Endothelial cell of umbilical vein (primary cell): ENCODE measurements at regions of chr16 and their contacts with region 1.

Region 1: GRCh38 chr16:10509534-10510025 is 70.8 kb downstream of the EMP2 start:
- DNase-seq: peak; percentile 62
- H3K4me3 ChIP-seq: no peak overlapping the region
- H3K27ac ChIP-seq: no peak overlapping the region
- H3K4me1 ChIP-seq: no peaks in the 10 kb centered on the region
- H3K27me3 ChIP-seq: peaks cover 0 to 4% of the 10 kb centered on the region in 2 experiments
- CTCF ChIP-seq: peak; percentile 57 to 65
- POLR2A ChIP-seq: no peak

Region 2: DNA sequence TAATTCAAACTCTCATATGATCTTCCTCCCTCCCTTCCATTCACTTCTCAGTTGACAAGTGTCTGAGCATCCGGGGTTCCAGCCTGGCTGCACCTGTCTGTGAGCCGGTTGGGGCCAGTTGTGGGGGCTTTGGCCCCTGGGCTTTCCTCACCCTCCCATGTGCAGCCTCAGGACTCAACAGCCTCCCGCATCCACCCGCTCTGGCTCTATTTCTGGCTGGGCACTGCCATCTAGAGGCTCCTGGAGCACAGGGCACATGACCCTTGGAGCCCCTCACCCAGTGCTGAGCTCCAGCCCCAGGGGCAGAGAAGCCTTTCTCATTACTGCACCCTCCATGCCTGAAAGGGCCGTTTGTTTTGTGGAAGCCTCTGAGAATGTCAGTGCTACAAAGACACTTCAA is 1374.8 kb before region 1 on chr16:
- CTCF ChIA-PET with region 1: interaction called, 18 read pairs
- POLR2A ChIA-PET with region 1: no interaction called
- dilution Hi-C with region 1: no loop called
- intact Hi-C with region 1: loop called (anchors 2 kb)
- DNase-seq: peak; percentile 47
- H3K4me3 ChIP-seq: no peak overlapping the region
- H3K27ac ChIP-seq: no peak overlapping the region
- H3K4me1 ChIP-seq: no peaks in the 10 kb centered on the region
- H3K27me3 ChIP-seq: no peaks in the 10 kb centered on the region
- CTCF ChIP-seq: peak; percentile 57 to 70
- POLR2A ChIP-seq: no peak

Region 3: GRCh38 chr16:9258423-9259051 is 1251.0 kb before region 1 on chr16:
- CTCF ChIA-PET with region 1: no interaction called
- POLR2A ChIA-PET with region 1: no interaction called
- dilution Hi-C with region 1: no loop called
- intact Hi-C with region 1: loop called (anchors 1 kb)
- DNase-seq: peak; percentile 3
- H3K4me3 ChIP-seq: no peak overlapping the region
- H3K27ac ChIP-seq: no peak overlapping the region
- H3K4me1 ChIP-seq: no peaks in the 10 kb centered on the region
- H3K27me3 ChIP-seq: no peaks in the 10 kb centered on the region
- CTCF ChIP-seq: peak; percentile 46 to 51
- POLR2A ChIP-seq: no peak

Region 4: DNA sequence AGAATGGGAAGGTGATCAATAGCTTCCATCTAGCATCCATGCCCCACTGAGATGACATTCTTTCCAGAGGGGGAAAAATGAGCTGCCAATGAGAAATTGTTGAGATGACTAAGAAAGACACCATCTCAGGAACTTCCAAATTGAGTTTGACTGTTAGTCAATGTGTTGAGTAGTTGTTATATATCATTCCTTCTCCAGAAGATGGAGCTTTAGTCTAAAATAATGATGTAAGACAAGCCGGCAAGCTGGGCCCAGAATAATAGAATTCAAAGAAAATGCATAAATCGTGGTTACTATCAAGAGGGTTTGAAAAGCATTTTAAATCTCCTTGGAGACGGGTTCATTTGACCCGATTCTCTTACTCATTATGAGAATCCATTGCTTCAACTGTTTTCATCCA is 194.8 kb before region 1 on chr16:
- CTCF ChIA-PET with region 1: interaction called, 17 read pairs
- POLR2A ChIA-PET with region 1: no interaction called
- dilution Hi-C with region 1: no loop called
- intact Hi-C with region 1: no loop called
- DNase-seq: no peak
- H3K4me3 ChIP-seq: no peak overlapping the region
- H3K27ac ChIP-seq: no peak overlapping the region
- H3K4me1 ChIP-seq: no peaks in the 10 kb centered on the region
- H3K27me3 ChIP-seq: no peaks in the 10 kb centered on the region
- CTCF ChIP-seq: no peak
- POLR2A ChIP-seq: no peak

Region 5: DNA sequence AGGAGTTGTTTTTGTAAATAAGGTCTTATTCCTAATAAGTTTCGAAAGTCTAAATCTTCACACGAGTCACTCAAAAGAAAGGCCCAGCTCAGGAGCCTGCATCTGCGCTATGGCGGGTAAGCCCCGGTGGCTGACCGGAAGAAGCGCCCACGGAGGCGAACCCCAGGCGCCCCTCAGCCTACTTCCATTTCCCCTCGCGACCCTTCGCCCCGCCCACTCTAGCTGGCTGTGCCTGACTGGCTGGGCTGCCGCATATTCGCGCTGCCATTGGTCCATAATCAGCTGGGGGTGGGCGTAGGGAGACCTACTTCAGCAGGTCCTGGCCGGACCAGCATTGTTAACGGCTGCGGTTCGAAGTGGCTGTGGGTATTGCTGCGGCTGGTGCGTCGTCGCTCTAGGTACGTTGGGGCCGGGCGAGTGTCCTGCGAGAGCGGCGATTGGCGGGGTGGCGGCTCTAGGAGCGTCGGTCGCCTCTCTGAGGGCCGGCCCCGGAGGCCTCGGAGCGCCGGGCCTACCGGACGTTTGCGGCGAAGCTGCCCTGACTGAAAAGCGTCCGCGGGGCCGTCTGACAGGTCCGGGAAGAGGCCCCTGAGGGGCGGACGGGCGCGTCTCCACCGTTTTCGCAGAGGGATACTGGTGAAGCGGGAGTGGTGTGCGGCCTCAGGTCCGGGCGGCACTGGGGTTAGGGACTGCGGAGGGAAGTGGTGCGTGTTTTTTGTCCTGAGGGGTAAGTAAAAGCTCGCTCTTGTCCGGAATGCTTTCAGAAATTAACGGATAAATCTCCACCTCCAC is 123.7 kb before region 1 on chr16 and contains the start of gene ATF7IP2:
- CTCF ChIA-PET with region 1: interaction called, 6 read pairs
- POLR2A ChIA-PET with region 1: no interaction called
- dilution Hi-C with region 1: no loop called
- intact Hi-C with region 1: loop called (anchors 1 kb)
- DNase-seq: peak; percentile 95
- H3K4me3 ChIP-seq: peak within 1 kb of the TSS; percentile 72 to 94 (median 94)
- H3K27ac ChIP-seq: peak within 1 kb of the TSS; percentile 55
- H3K4me1 ChIP-seq: peaks cover 8% of the 10 kb centered on the region
- H3K27me3 ChIP-seq: no peaks in the 10 kb centered on the region
- CTCF ChIP-seq: no peak
- POLR2A ChIP-seq: peak; percentile 91
- total RNA-seq, gene ATF7IP2: 13.0 and 14.6 TPM in 2 replicates

Region 6: DNA sequence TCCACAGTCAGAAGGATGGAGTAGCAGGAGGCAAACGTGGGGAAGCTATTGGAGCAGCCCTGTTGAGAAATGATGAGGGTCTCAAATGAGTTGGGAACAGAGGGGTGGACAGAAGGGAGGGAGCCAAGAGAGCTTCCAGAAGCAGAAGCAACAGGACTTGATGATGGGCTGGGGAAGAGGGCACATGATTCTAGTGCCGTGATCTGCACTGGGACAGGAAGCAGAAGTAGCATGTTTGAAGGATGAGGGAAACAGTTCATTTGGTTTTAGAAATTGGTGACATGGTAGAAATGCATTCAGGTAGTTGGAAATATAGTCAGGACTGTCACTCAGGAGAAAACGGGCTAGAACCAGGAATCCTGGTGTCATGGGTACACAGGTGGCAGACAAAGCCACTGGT is 51.4 kb after region 1 on chr16:
- CTCF ChIA-PET with region 1: no interaction called
- POLR2A ChIA-PET with region 1: no interaction called
- dilution Hi-C with region 1: no loop called
- intact Hi-C with region 1: no loop called
- DNase-seq: no peak
- H3K4me3 ChIP-seq: no peak overlapping the region
- H3K27ac ChIP-seq: no peak overlapping the region
- H3K4me1 ChIP-seq: peaks cover 13% of the 10 kb centered on the region
- H3K27me3 ChIP-seq: no peaks in the 10 kb centered on the region
- CTCF ChIP-seq: no peak
- POLR2A ChIP-seq: no peak

Region 7: GRCh38 chr16:10737068-10737625 is 227.6 kb after region 1 on chr16:
- CTCF ChIA-PET with region 1: interaction called, 189 read pairs
- POLR2A ChIA-PET with region 1: no interaction called
- dilution Hi-C with region 1: no loop called
- intact Hi-C with region 1: loop called (anchors 1 kb)
- DNase-seq: peak; percentile 67
- H3K4me3 ChIP-seq: no peak overlapping the region
- H3K27ac ChIP-seq: no peak overlapping the region
- H3K4me1 ChIP-seq: peaks cover 7% of the 10 kb centered on the region
- H3K27me3 ChIP-seq: no peaks in the 10 kb centered on the region
- CTCF ChIP-seq: peak; percentile 77 to 82
- POLR2A ChIP-seq: no peak

Region 8: DNA sequence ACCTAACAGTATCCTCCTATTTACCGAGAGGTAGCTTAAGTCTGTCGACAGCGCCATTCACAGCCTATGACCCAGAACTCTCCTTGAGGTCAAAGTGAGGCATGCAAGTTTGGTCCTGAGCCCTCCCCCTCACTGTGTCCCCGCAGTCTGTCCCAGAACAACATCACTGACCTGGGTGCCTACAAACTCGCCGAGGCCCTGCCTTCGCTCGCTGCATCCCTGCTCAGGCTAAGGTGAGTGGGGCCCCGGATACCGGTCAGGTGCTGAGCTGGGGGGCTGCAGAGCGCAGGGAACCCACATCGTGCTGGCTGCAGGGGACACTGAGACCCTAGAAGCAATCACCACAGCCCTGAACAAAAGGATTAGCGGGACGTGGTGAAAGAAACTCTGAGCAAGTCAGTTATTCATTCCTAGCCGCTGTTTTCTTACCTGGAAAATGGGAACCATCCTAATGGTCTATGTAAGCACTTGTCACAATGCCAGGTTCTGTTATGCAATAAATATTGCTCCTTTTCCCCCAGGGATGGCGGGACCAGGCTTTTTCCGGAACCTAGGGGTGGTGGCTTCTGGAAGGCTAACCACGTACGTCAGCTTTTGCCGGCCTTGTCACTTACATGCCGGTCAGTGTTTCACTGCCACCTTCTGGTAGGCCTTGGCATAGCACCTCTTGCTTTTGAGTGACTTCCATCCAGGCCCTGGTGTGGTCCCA is 408.9 kb after region 1 on chr16:
- CTCF ChIA-PET with region 1: interaction called, 55 read pairs
- POLR2A ChIA-PET with region 1: no interaction called
- dilution Hi-C with region 1: no loop called
- intact Hi-C with region 1: loop called (anchors 1 kb)
- DNase-seq: peak; percentile 92
- H3K4me3 ChIP-seq: peak overlapping the region in 1 of 3 experiments; percentile 9
- H3K27ac ChIP-seq: no peak overlapping the region
- H3K4me1 ChIP-seq: no peaks in the 10 kb centered on the region
- H3K27me3 ChIP-seq: no peaks in the 10 kb centered on the region
- CTCF ChIP-seq: peak; percentile 95 to 98
- POLR2A ChIP-seq: no peak